ENCODE measurements at regions of chr10 and their contacts with region 1.

Region 1: DNA sequence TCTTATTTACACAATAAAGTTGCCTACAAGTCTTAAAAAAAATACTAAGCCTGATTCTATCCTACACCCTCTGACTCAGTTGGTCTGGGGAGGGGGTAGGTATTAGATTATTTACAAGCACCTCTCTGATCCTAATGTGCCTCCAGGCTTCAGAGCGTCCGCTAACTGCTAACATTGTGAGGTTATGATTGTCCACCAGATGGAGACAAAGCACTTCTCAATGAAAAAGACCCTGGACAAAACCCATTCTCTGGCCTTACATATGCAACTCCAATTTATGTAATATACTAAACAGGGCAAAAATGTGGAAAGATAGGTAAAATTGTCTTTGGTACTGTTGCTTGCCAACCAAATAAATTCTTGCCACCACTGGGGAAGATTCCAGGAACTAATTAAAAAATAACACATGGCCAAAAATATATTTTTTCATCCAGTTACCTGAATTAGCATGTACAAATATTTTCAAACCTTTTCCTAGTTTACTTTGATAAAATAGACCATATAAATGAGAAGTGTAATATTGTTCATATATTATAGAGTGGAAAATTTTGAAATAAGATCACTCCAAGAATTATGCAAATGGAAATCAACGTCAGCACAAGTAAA is 92.4 kb downstream of the KIF20B start:
- DNase-seq: no peak
- ATAC-seq: peak; percentile 57
- H3K4me3 Mint-ChIP-seq: no peak overlapping the region
- H3K27ac Mint-ChIP-seq: no peak overlapping the region
- H3K4me1 Mint-ChIP-seq: peaks cover 4% of the 10 kb centered on the region
- H3K27me3 Mint-ChIP-seq: no peaks in the 10 kb centered on the region
- CTCF ChIP-seq: peak; percentile 80

Region 2: GRCh38 chr10:89887830-89888229 is 94.1 kb after region 1 on chr10:
- CTCF ChIA-PET with region 1: no interaction called
- POLR2A ChIA-PET with region 1: no interaction called
- intact Hi-C with region 1: loop called (anchors 1 kb)
- DNase-seq: peak; percentile 32
- ATAC-seq: peak; percentile 75
- H3K4me3 Mint-ChIP-seq: peak overlapping the region; percentile 81
- H3K27ac Mint-ChIP-seq: peak overlapping the region; percentile 98
- H3K4me1 Mint-ChIP-seq: peaks cover 54% of the 10 kb centered on the region
- H3K27me3 Mint-ChIP-seq: peaks cover 3% of the 10 kb centered on the region
- CTCF ChIP-seq: no peak

Region 3: DNA sequence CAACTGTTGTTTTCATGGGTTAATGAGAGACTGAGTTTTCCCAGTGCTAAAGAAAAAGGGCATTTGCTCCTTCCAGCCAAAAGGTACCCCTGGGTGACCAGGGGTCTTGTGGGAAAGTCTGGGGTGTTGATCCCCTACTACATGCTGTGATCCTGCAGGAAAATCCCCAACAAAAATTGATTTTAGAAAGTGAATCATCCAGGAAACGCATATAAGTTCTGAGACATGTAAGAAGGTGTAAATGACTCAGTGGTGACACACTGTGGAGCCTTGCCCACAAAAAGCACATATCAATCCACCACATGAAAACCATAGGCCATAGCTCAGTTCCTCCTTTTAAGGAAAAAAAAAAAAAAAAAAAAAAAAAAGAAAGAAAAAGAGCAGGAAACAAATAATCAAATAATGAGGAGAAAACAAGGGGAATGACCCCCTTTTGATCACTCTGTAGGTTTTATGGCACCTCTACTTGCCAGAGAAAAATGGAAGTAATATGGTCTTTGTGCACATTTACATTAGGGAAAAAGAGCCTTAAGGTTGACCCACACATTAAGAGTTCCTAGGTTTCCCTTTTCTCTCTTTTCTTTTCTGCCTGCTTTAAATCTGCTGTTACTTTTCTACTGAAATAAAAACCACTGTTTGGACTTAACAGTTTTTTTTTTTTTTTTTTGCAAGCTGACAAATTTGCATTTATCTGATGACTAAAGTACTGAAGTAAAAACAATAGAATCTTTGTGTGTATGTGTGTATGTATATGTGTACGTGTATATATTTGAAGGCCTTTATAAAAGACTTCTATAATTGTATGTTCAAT is 293.6 kb after region 1 on chr10:
- CTCF ChIA-PET with region 1: interaction called, 3 read pairs
- POLR2A ChIA-PET with region 1: no interaction called
- intact Hi-C with region 1: loop called (anchors 2 kb)
- DNase-seq: no peak
- ATAC-seq: peak; percentile 67
- H3K4me3 Mint-ChIP-seq: no peak overlapping the region
- H3K27ac Mint-ChIP-seq: no peak overlapping the region
- H3K4me1 Mint-ChIP-seq: peaks cover 6% of the 10 kb centered on the region
- H3K27me3 Mint-ChIP-seq: no peaks in the 10 kb centered on the region
- CTCF ChIP-seq: no peak

Region 4: DNA sequence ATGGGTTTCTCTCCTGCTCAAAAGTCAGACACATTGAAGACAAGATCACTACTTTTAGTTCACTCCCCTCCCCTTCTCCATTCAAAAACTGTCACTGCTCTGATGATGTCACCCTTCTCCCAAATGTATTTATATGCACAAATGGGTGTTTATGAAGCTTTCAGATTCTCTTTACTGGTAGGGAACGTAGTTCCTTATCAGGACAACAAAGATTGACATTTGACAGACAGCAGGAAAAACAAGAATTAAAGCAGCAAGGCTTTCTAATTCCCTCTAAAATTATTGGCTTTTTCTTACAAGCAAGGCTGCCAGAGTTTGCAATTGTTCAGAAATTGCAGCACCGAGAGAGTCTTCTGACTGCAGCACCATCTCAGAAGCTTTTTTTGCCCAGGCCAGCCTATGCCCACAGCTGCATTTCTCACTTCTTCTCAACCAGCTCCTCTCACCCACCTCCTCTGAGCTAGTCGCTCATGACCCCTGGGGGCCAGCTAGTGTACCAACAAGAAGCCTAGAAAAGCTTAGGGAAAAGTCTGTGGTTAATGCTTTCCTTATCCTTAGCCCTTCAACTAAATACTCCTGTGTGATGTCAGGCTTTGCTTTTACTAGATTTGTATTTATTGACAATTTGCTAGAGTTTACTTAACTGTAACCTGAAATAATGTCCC is 799.0 kb after region 1 on chr10:
- CTCF ChIA-PET with region 1: interaction called, 13 read pairs
- POLR2A ChIA-PET with region 1: no interaction called
- intact Hi-C with region 1: loop called (anchors 1 kb)
- DNase-seq: no peak
- ATAC-seq: peak; percentile 54
- H3K4me3 Mint-ChIP-seq: no peak overlapping the region
- H3K27ac Mint-ChIP-seq: no peak overlapping the region
- H3K4me1 Mint-ChIP-seq: no peaks in the 10 kb centered on the region
- H3K27me3 Mint-ChIP-seq: peaks cover 2% of the 10 kb centered on the region
- CTCF ChIP-seq: no peak

Region 5: DNA sequence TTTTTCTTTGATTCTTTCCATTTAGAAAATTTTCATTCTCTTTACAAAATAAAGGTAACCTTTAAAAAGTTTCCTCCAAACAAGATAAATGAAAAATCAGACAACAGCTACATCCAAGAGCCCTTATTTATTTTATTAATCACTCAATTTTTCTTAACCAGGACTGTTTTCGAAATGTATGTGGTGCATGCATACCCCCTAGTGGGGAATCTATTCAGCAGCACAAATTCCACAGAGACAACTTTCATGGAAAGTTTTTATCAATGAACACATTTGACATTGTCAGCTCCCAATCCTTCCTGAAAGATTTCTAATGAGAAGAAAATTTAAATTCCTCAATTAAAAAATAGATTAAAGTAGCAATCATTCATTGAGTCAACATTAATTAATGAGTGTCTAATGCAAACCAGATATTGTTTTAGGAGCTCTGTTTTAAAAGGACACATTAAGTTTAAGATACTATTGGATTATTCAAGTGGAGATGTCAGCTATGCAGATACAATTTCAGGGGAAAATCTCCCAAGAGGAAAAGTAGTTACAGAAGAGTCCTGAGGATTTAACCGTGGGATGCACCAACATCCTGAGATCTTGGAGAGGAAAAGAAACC is 1069.3 kb after region 1 on chr10:
- CTCF ChIA-PET with region 1: interaction called, 3 read pairs
- POLR2A ChIA-PET with region 1: no interaction called
- intact Hi-C with region 1: loop called (anchors 1 kb)
- DNase-seq: no peak
- ATAC-seq: no peak
- H3K4me3 Mint-ChIP-seq: no peak overlapping the region
- H3K27ac Mint-ChIP-seq: no peak overlapping the region
- H3K4me1 Mint-ChIP-seq: peaks cover 3% of the 10 kb centered on the region
- H3K27me3 Mint-ChIP-seq: peaks cover 23% of the 10 kb centered on the region
- CTCF ChIP-seq: peak; percentile 15

Region 6: DNA sequence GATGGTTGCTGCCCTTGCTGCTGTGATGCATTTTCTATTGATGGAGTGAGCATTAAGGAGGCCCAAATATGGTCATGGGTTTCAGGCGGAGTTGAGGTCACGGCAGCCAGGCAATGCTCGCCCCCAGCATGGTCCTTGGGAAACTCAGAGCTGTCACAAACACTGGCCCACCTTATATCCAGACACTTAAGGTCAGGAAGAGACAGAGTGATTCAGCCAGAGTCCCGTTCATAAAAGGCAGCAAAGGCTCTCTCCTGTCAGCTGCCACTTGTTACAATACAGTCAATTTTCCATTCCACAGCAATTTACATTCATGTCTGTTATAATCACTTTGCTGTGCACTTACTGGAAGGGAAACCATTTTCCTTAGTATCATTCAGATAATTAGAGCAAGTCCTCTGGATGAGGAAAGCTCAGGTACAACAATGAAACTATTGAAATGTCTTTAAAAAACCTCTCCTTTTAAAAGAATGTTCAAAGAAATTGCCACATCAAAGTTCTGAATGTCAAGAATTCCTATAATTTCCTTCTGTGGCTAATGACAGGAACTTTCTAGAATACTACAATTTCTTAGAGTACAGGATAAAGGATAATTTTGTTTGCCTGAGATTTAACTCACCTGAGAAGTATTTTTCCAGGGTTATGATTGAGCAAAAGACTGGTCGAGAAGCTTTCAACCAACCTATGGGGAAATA is 1142.0 kb after region 1 on chr10:
- CTCF ChIA-PET with region 1: no interaction called
- POLR2A ChIA-PET with region 1: no interaction called
- intact Hi-C with region 1: no loop called
- DNase-seq: no peak
- ATAC-seq: no peak
- H3K4me3 Mint-ChIP-seq: no peak overlapping the region
- H3K27ac Mint-ChIP-seq: no peak overlapping the region
- H3K4me1 Mint-ChIP-seq: peaks cover 3% of the 10 kb centered on the region
- H3K27me3 Mint-ChIP-seq: no peaks in the 10 kb centered on the region
- CTCF ChIP-seq: no peak